ENCODE measurements at regions of chr3 and their contacts with region 1.

Region 1: DNA sequence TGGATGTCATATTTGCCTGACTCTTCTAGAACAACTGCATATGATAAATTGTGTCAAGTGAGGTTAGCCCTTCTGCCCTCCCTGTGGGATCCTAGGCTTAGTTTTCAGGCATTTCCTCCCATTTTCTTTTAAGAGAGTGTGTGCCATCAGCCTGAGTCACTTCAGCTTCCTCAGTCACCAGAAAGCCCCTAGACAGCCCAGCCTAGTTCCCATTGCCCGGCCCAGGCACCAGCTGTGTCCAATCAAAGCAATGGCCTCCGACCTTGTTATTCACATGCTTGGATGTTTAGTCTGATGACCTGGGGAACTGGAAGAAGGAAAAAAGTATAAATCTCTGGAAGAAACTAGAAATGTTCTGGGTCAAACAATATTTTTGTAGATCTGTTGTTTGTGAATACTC is 221.9 kb upstream of the LRIG1 start:
- DNase-seq: no peak
- ATAC-seq: peak in 1 of 4 donors; percentile 53
- H3K4me3 ChIP-seq: no peak overlapping the region
- H3K27ac ChIP-seq: no peak overlapping the region
- H3K4me1 ChIP-seq: no peaks in the 10 kb centered on the region
- H3K27me3 ChIP-seq: no peaks in the 10 kb centered on the region
- CTCF ChIP-seq: no peak

Region 2: DNA sequence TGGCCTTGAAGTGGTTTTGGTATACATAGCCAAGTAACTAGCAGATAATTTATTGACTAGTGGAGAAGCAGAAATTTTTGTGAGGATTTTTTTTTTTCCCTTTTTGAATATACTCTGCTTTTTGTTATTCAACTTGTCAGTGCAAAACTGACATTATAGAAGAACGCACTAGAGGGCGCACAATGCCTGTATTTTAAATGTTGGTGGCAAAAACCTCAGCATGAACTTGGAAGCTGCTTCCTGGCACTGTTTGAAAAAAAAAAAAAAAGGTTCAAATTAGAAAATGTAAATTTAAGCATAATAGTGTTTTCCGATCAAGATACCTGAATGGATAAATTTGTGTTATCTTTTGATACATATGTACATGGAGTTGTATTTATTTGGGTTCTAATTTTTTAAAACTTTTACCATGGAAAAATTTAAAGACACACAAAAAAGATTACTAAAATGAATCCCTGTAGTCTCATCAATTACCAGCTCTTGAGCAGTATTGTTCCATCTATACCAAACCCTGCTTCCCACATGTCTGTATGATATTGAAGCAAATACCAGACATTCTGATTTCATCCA is 445.9 kb before region 1 on chr3:
- intact Hi-C with region 1: no loop called
- DNase-seq: peak in 3 of 6 donors; percentile 53 to 72 (median 59)
- ATAC-seq: peak; percentile 73 to 96 (median 88)
- H3K4me3 ChIP-seq: no peak overlapping the region
- H3K27ac ChIP-seq: no peak overlapping the region
- H3K4me1 ChIP-seq: peaks cover 0 to 3% (median 0%) of the 10 kb centered on the region in 3 donors
- H3K27me3 ChIP-seq: no peaks in the 10 kb centered on the region
- CTCF ChIP-seq: peak in 3 of 4 donors; percentile 37 to 52 (median 46)

Region 3: GRCh38 chr3:66407611-66408218 is 315.0 kb before region 1 on chr3:
- intact Hi-C with region 1: loop called in 1 of 3 experiments (anchors 10 kb)
- DNase-seq: peak in 5 of 6 donors; percentile 62 to 91 (median 79)
- ATAC-seq: peak; percentile 63 to 89 (median 84)
- H3K4me3 ChIP-seq: no peak overlapping the region
- H3K27ac ChIP-seq: no peak overlapping the region
- H3K4me1 ChIP-seq: peaks cover 3 to 16% (median 12%) of the 10 kb centered on the region in 3 donors
- H3K27me3 ChIP-seq: no peaks in the 10 kb centered on the region
- CTCF ChIP-seq: peak; percentile 81 to 92 (median 87)

Measured in pancreas (tissue), 10 donors.